Activated CD8-positive, alpha-beta T cell treated with anti-CD3 and anti-CD28 coated beads for 36 hours (primary cell): ENCODE measurements at regions of chr12 and their contacts with region 1.

Region 1: DNA sequence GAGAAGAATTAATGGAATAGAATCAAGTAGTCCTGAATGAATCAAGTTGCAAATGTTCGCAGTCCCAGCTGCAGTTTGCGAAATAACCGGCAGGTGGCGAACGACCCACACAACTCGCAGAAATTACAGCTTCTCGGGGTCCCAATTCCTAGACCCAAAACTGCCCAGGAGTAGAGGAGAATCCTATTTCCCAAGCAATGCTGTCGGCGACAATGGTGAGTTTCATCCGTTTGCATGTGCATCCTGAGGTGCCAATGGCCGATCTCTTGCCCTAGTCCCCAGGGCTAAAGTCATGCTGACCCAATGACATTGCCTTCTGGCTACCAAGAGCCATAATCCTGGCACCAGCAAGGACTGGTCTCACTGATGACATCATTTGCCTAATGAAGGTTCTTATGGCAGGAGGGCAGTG is 8.5 kb upstream of the ASCL1 start:
- DNase-seq: peak; percentile 74
- ATAC-seq: no peak
- H3K4me3 Mint-ChIP-seq: no peak overlapping the region
- H3K27ac Mint-ChIP-seq: no peak overlapping the region
- H3K4me1 Mint-ChIP-seq: peaks cover 9% of the 10 kb centered on the region
- H3K27me3 Mint-ChIP-seq: peaks cover 53% of the 10 kb centered on the region
- CTCF ChIP-seq: peak; percentile 96

Region 2: GRCh38 chr12:102745971-102746600 is 202.9 kb before region 1 on chr12:
- CTCF ChIA-PET with region 1: no interaction called
- POLR2A ChIA-PET with region 1: no interaction called
- intact Hi-C with region 1: no loop called
- DNase-seq: no peak
- ATAC-seq: no peak
- H3K4me3 Mint-ChIP-seq: no peak overlapping the region
- H3K27ac Mint-ChIP-seq: no peak overlapping the region
- H3K4me1 Mint-ChIP-seq: no peaks in the 10 kb centered on the region
- H3K27me3 Mint-ChIP-seq: peaks cover 2% of the 10 kb centered on the region
- CTCF ChIP-seq: no peak

Region 3: GRCh38 chr12:102964872-102965271 is 15.9 kb after region 1 on chr12:
- CTCF ChIA-PET with region 1: interaction called, 12 read pairs
- POLR2A ChIA-PET with region 1: no interaction called
- intact Hi-C with region 1: no loop called
- DNase-seq: peak; percentile 52
- ATAC-seq: peak; percentile 60
- H3K4me3 Mint-ChIP-seq: peak overlapping the region; percentile 59
- H3K27ac Mint-ChIP-seq: no peak overlapping the region
- H3K4me1 Mint-ChIP-seq: peaks cover 25% of the 10 kb centered on the region
- H3K27me3 Mint-ChIP-seq: peaks cover 79% of the 10 kb centered on the region
- CTCF ChIP-seq: no peak

Region 4: GRCh38 chr12:103503977-103504376 is 555.0 kb after region 1 on chr12:
- CTCF ChIA-PET with region 1: no interaction called
- POLR2A ChIA-PET with region 1: interaction called, 3 read pairs
- intact Hi-C with region 1: loop called (anchors 5 kb)
- DNase-seq: peak; percentile 70
- ATAC-seq: no peak
- H3K4me3 Mint-ChIP-seq: no peak overlapping the region
- H3K27ac Mint-ChIP-seq: no peak overlapping the region
- H3K4me1 Mint-ChIP-seq: peaks cover 39% of the 10 kb centered on the region
- H3K27me3 Mint-ChIP-seq: peaks cover 12% of the 10 kb centered on the region
- CTCF ChIP-seq: peak; percentile 70